Activated CD8-positive, alpha-beta T cell treated with anti-CD3 and anti-CD28 coated beads, Interleukin-2, amount 10 ng/mL, durations not matched to agents 7 days and 5 days (primary cell): ENCODE measurements at regions of chr6 and their contacts with region 1.

Region 1: GRCh38 chr6:10694302-10695085 is at the starts of genes C6orf52 and PAK1IP1:
- DNase-seq: peak; percentile 97
- ATAC-seq: peak; percentile 93
- H3K4me3 Mint-ChIP-seq: peak within 1 kb of the TSS; percentile 94
- H3K27ac Mint-ChIP-seq: peak within 1 kb of the TSS; percentile 100
- H3K4me1 Mint-ChIP-seq: peaks cover 31% of the 10 kb centered on the region
- H3K27me3 Mint-ChIP-seq: no peaks in the 10 kb centered on the region
- total RNA-seq, gene C6orf52: 2.3 to 2.9 TPM
- total RNA-seq, gene PAK1IP1: 16.9 to 17.6 TPM

Region 2: GRCh38 chr6:10528170-10528981 is 166.1 kb before region 1 on chr6:
- CTCF ChIA-PET with region 1: interaction called, 5 read pairs
- POLR2A ChIA-PET with region 1: interaction called, 10 read pairs
- DNase-seq: peak; percentile 42
- ATAC-seq: peak; percentile 74
- H3K4me3 Mint-ChIP-seq: peak overlapping the region; percentile 80
- H3K27ac Mint-ChIP-seq: peak overlapping the region; percentile 88
- H3K4me1 Mint-ChIP-seq: peaks cover 46% of the 10 kb centered on the region
- H3K27me3 Mint-ChIP-seq: peaks cover 2% of the 10 kb centered on the region

Region 3: GRCh38 chr6:10682355-10682988 is 12.0 kb before region 1 on chr6:
- CTCF ChIA-PET with region 1: no interaction called
- POLR2A ChIA-PET with region 1: interaction called, 10 read pairs
- DNase-seq: no peak
- ATAC-seq: peak; percentile 64
- H3K4me3 Mint-ChIP-seq: no peak overlapping the region
- H3K27ac Mint-ChIP-seq: peak overlapping the region; percentile 71
- H3K4me1 Mint-ChIP-seq: peaks cover 40% of the 10 kb centered on the region
- H3K27me3 Mint-ChIP-seq: no peaks in the 10 kb centered on the region

Region 4: GRCh38 chr6:10722820-10723566 is 28.5 kb after region 1 on chr6 and contains the start of gene TMEM14C:
- CTCF ChIA-PET with region 1: interaction called, 23 read pairs
- POLR2A ChIA-PET with region 1: interaction called, 43 read pairs
- DNase-seq: peak; percentile 87
- ATAC-seq: peak; percentile 92
- H3K4me3 Mint-ChIP-seq: peak within 1 kb of the TSS; percentile 91
- H3K27ac Mint-ChIP-seq: peak within 1 kb of the TSS; percentile 90
- H3K4me1 Mint-ChIP-seq: peaks cover 58% of the 10 kb centered on the region
- H3K27me3 Mint-ChIP-seq: no peaks in the 10 kb centered on the region
- total RNA-seq, gene TMEM14C: 35.9 to 39.2 TPM

Region 5: DNA sequence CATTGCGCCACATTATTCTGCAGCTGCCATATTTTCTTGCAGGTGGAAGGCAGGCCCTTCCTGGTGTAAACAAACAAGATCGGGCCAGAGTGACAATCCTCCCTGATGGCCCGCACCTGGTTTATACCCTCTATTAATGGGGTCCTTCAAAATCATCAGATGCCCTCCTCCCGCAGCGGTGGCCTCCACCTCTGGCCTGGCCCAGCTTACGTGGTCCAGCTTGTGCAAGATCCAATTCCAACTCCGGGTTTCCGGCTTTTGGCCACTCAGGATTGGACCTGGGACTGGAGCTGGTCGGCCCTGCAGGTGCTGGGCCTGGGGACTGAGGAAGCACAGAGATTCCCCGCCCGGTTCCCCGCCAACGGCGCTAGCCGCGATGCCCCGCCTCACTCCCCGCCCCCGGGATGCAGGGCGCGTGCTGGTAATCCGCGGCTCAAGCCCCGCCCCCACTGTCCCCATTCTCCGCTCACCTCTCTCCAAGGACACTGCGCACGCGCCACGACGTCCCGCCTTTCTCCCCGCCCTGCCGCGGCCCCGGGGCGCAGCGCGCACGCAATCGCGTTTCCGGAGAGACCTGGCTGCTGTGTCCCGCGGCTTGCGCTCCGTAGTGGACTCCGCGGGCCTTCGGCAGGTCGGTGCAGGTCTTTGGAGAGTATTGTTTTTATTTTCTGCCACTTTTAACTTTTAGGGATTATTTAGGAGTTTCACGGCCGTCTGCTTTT is 52.9 kb after region 1 on chr6 and contains the start of gene TMEM14B:
- CTCF ChIA-PET with region 1: interaction called, 11 read pairs
- POLR2A ChIA-PET with region 1: interaction called, 10 read pairs
- DNase-seq: peak; percentile 100
- ATAC-seq: peak; percentile 97
- H3K4me3 Mint-ChIP-seq: peak within 1 kb of the TSS; percentile 96
- H3K27ac Mint-ChIP-seq: peak within 1 kb of the TSS; percentile 95
- H3K4me1 Mint-ChIP-seq: peaks cover 45% of the 10 kb centered on the region
- H3K27me3 Mint-ChIP-seq: no peaks in the 10 kb centered on the region
- total RNA-seq, gene TMEM14B: 85.7 to 92.6 TPM

Region 6: GRCh38 chr6:10809098-10809497 is 114.6 kb after region 1 on chr6:
- CTCF ChIA-PET with region 1: no interaction called
- POLR2A ChIA-PET with region 1: no interaction called
- DNase-seq: no peak
- ATAC-seq: no peak
- H3K4me3 Mint-ChIP-seq: no peak overlapping the region
- H3K27ac Mint-ChIP-seq: no peak overlapping the region
- H3K4me1 Mint-ChIP-seq: no peaks in the 10 kb centered on the region
- H3K27me3 Mint-ChIP-seq: no peaks in the 10 kb centered on the region